ENCODE measurements at regions of chr5 and their contacts with region 1.

Region 1: DNA sequence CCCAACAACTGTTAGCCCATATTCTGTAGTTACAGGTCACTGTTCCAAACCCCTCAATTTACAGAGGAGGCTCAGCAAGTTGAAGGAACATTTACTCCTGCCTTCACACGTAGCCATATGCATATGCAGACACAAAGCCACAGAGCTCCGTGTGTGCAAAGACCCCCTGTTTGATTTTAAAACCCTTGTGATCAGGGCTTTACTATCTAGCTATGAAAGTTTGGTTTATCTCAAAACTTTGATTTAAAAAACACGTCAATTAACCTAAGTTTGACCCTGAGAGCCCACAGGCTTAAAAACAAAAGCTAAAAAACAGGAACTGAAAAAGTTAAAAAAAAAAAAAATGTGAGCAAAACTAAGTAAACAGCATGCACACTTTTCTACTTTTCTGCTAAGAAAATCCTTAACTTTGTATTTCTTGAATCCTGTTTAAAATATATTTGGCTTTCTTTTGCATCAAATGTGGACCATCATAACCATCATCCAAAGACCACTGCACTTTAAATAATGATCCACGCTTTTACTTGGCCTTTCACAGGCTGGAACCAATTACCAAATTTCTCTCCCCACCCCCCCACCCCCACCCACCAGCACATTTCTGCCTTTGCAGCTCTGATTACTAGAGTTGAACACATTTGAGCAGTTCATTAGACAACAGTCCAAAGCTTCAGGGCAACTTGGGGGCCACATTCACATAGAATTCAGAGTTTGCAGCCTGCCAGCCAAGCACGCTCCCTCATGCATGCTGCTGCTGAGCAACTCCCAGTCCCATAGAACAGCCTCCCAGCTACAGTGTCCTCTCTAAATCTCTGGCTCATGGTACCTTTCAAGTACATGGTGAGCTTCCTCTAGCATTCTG is 128.8 kb upstream of the MAP3K1 start:
- DNase-seq: peak; percentile 46
- ATAC-seq: peak; percentile 87
- H3K4me3 ChIP-seq: peak overlapping the region; percentile 35; the same call in 1 of the 2 replicates
- H3K27ac ChIP-seq: peak overlapping the region; percentile 68
- H3K4me1 ChIP-seq: peaks cover 24% of the 10 kb centered on the region
- H3K27me3 ChIP-seq: no peaks in the 10 kb centered on the region
- CTCF ChIP-seq: no peak
- EP300 ChIP-seq: peak; percentile 76 to 92
- POLR2A ChIP-seq: no peak
- RAD21 ChIP-seq: no peak

Region 2: GRCh38 chr5:56415356-56415765 is 271.2 kb before region 1 on chr5:
- CTCF ChIA-PET with region 1: no interaction called
- POLR2A ChIA-PET with region 1: no interaction called
- RAD21 ChIA-PET with region 1: interaction called, 10 read pairs
- SMC1A ChIA-PET with region 1: interaction called, 4 read pairs
- in situ Hi-C with region 1: no loop called
- intact Hi-C with region 1: no loop called
- DNase-seq: peak; percentile 92
- ATAC-seq: peak; percentile 84
- H3K4me3 ChIP-seq: peak overlapping the region; percentile 48; the same call in 1 of the 2 replicates
- H3K27ac ChIP-seq: peak overlapping the region; percentile 79
- H3K4me1 ChIP-seq: peaks cover 40% of the 10 kb centered on the region
- H3K27me3 ChIP-seq: no peaks in the 10 kb centered on the region
- CTCF ChIP-seq: no peak
- EP300 ChIP-seq: peak in 1 of 2 experiments; percentile 39; a peak in 2 of 4 replicates
- POLR2A ChIP-seq: 0 out of 2 replicates have a peak, but pooled peaks have one; percentile 26
- RAD21 ChIP-seq: 0 out of 2 replicates have a peak, but pooled peaks have one; percentile 10

Region 3: DNA sequence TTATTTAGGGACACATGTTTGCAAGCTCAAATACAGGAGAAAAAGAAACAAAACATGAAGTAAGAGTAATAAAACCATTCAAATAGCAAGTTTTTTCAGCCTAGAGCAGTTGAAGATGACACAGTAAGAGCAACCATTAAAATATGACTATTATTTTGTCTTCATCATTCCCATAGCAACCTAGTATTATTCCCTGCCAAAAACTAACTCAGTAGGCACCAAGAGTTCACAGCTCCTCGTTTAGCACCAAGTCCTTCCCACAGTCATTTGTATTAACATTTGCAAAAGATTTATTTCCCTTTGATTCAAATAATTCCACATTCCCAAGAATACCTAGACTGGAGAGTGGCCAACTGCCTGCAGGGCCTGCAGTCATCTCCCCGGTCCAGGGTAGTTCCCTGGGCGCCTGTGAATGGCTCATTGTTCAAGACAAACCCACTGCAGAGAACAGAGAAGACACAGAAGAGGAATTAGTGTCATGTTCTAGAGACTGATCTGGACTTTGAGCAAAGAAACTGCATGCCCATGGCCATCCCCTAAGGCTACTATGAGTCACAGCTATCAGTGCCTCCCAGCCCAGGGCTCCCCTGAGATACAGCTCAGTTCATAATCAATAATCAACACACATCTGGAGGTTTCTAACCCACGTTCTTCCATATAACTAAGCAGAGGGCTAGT is 10.3 kb before region 1 on chr5:
- CTCF ChIA-PET with region 1: interaction called, 18 read pairs
- POLR2A ChIA-PET with region 1: interaction called, 19 read pairs
- RAD21 ChIA-PET with region 1: interaction called, 96 read pairs
- SMC1A ChIA-PET with region 1: interaction called, 84 read pairs
- in situ Hi-C with region 1: no loop called
- intact Hi-C with region 1: no loop called
- DNase-seq: no peak
- ATAC-seq: peak; percentile 95
- H3K4me3 ChIP-seq: no peak overlapping the region
- H3K27ac ChIP-seq: no peak overlapping the region
- H3K4me1 ChIP-seq: peaks cover 2% of the 10 kb centered on the region; the same call in 1 of the 2 replicates
- H3K27me3 ChIP-seq: no peaks in the 10 kb centered on the region
- CTCF ChIP-seq: no peak
- EP300 ChIP-seq: peak in 1 of 2 experiments; percentile 64; a peak in 1 of 4 replicates
- POLR2A ChIP-seq: no peak
- RAD21 ChIP-seq: no peak

Region 4: GRCh38 chr5:56698463-56699381 is 12.2 kb after region 1 on chr5:
- CTCF ChIA-PET with region 1: no interaction called
- POLR2A ChIA-PET with region 1: no interaction called
- RAD21 ChIA-PET with region 1: interaction called, 3 read pairs
- SMC1A ChIA-PET with region 1: interaction called, 13 read pairs
- in situ Hi-C with region 1: no loop called
- intact Hi-C with region 1: no loop called
- DNase-seq: no peak
- ATAC-seq: peak; percentile 48
- H3K4me3 ChIP-seq: no peak overlapping the region
- H3K27ac ChIP-seq: no peak overlapping the region
- H3K4me1 ChIP-seq: no peaks in the 10 kb centered on the region
- H3K27me3 ChIP-seq: peaks cover 0 to 13% of the 10 kb centered on the region in 2 experiments; a peak in 2 of 4 replicates
- CTCF ChIP-seq: no peak
- EP300 ChIP-seq: no peak
- POLR2A ChIP-seq: no peak
- RAD21 ChIP-seq: no peak

Region 5: GRCh38 chr5:56755036-56755555 is 68.5 kb after region 1 on chr5:
- CTCF ChIA-PET with region 1: no interaction called
- POLR2A ChIA-PET with region 1: no interaction called
- RAD21 ChIA-PET with region 1: no interaction called
- SMC1A ChIA-PET with region 1: no interaction called
- in situ Hi-C with region 1: no loop called
- intact Hi-C with region 1: no loop called
- DNase-seq: no peak
- ATAC-seq: peak; percentile 40; the same call in 1 of the 3 replicates
- H3K4me3 ChIP-seq: no peak overlapping the region
- H3K27ac ChIP-seq: no peak overlapping the region
- H3K4me1 ChIP-seq: no peaks in the 10 kb centered on the region
- H3K27me3 ChIP-seq: no peaks in the 10 kb centered on the region
- CTCF ChIP-seq: no peak
- EP300 ChIP-seq: no peak
- POLR2A ChIP-seq: no peak
- RAD21 ChIP-seq: no peak